CD4-positive, alpha-beta T cell (primary cell): ENCODE measurements at regions of chr3 and their contacts with region 1.

Region 1: DNA sequence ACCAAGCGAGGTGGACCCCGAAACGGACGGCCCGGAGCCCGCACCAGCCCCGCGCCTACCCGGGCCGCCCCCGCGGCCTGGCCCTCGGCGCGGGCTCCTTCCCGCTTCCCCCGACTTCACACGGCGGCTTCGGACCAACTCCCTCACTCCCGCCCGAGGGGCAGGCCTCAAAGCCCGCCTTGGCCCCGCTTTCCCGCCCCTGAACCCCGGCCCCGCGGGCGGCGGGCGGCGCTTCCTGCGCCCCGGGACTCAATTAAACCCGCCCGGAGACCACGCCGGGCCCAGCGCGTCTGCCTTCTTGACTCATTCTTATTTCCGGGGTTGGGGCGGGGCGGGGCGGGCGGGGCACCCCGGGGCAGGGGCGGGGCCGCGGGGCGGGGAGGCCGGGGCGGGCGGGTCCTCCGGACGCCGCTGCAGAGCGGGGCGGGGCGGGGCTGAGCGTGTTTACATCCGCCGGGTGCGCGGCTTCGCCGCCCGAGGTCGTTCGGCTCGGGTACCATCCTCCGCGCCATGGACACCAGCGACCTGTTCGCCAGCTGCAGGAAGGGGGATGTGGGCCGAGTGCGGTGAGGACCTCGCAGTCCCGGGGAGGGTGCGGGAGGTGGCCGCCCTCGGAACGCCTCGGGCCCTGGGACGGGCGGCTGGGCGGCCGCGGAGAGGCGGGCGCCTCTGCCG is at the start of gene ABTB1:
- DNase-seq: peak; percentile 75 to 94 (median 86)
- ATAC-seq: peak; percentile 83
- H3K4me3 ChIP-seq: peak within 1 kb of the TSS; percentile 73
- H3K4me3 Mint-ChIP-seq: peak within 1 kb of the TSS; percentile 97
- H3K27ac ChIP-seq: peak within 1 kb of the TSS; percentile 64 to 79
- H3K27ac Mint-ChIP-seq: peak within 1 kb of the TSS; percentile 98
- H3K4me1 ChIP-seq: peaks cover 32% of the 10 kb centered on the region
- H3K4me1 Mint-ChIP-seq: peaks cover 40% of the 10 kb centered on the region
- H3K27me3 ChIP-seq: no peaks in the 10 kb centered on the region
- H3K27me3 Mint-ChIP-seq: no peaks in the 10 kb centered on the region
- CTCF ChIP-seq: no peak
- total RNA-seq, gene ABTB1: 116 to 118 TPM

Region 2: GRCh38 chr3:126083913-126084767 is 1588.5 kb before region 1 on chr3 and contains the start of gene SLC41A3:
- CTCF ChIA-PET with region 1: no interaction called
- POLR2A ChIA-PET with region 1: interaction called, 5 read pairs
- intact Hi-C with region 1: loop called in 1 of 2 experiments (anchors 10 kb)
- DNase-seq: peak; percentile 65 to 88 (median 82)
- ATAC-seq: peak; percentile 86
- H3K4me3 ChIP-seq: peak within 1 kb of the TSS; percentile 70
- H3K4me3 Mint-ChIP-seq: peak within 1 kb of the TSS; percentile 93
- H3K27ac ChIP-seq: peak within 1 kb of the TSS; percentile 33 to 72
- H3K27ac Mint-ChIP-seq: peak within 1 kb of the TSS; percentile 85
- H3K4me1 ChIP-seq: peaks cover 28% of the 10 kb centered on the region
- H3K4me1 Mint-ChIP-seq: peaks cover 30% of the 10 kb centered on the region
- H3K27me3 ChIP-seq: no peaks in the 10 kb centered on the region
- H3K27me3 Mint-ChIP-seq: no peaks in the 10 kb centered on the region
- CTCF ChIP-seq: peak; percentile 82
- total RNA-seq, gene SLC41A3: 26.5 to 29.1 TPM

Region 3: GRCh38 chr3:126703512-126704462 is 968.9 kb before region 1 on chr3 and contains the start of gene CHCHD6:
- CTCF ChIA-PET with region 1: no interaction called
- POLR2A ChIA-PET with region 1: no interaction called
- intact Hi-C with region 1: loop called in 1 of 2 experiments (anchors 5 kb)
- DNase-seq: peak; percentile 93 to 98 (median 96)
- ATAC-seq: peak; percentile 94
- H3K4me3 ChIP-seq: peak within 1 kb of the TSS; percentile 81
- H3K4me3 Mint-ChIP-seq: peak within 1 kb of the TSS; percentile 98
- H3K27ac ChIP-seq: no peak within 1 kb of the TSS
- H3K27ac Mint-ChIP-seq: peak within 1 kb of the TSS; percentile 70
- H3K4me1 ChIP-seq: peaks cover 19% of the 10 kb centered on the region
- H3K4me1 Mint-ChIP-seq: peaks cover 31% of the 10 kb centered on the region
- H3K27me3 ChIP-seq: peaks cover 0 to 4% of the 10 kb centered on the region in 2 experiments
- H3K27me3 Mint-ChIP-seq: peaks cover 21% of the 10 kb centered on the region
- CTCF ChIP-seq: peak; percentile 25
- total RNA-seq, gene CHCHD6: 8.7 to 9.3 TPM

Region 4: DNA sequence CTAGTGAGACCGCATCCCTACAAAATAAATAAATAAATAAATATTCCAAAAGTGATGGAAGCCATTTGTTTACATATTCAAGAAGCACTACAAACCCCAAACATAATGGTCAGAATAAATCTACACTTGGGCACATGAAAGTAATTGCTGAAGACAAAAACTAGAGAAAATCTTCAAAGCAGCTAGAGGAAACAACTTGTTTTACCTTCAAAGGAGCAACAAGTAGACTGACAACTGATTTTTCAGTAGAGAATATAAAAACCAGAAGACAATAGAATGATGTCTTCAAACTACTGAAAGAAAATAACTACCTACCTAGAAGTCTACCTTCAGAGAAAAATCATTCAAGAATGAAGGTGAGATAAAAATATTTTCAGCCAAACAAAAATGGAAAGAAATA is 171.5 kb before region 1 on chr3:
- CTCF ChIA-PET with region 1: no interaction called
- POLR2A ChIA-PET with region 1: no interaction called
- intact Hi-C with region 1: no loop called
- DNase-seq: no peak
- ATAC-seq: no peak
- H3K4me3 ChIP-seq: no peak overlapping the region
- H3K4me3 Mint-ChIP-seq: no peak overlapping the region
- H3K27ac ChIP-seq: no peak overlapping the region
- H3K27ac Mint-ChIP-seq: no peak overlapping the region
- H3K4me1 ChIP-seq: no peaks in the 10 kb centered on the region
- H3K4me1 Mint-ChIP-seq: no peaks in the 10 kb centered on the region
- H3K27me3 ChIP-seq: peaks cover 5 to 7% of the 10 kb centered on the region in 2 experiments
- H3K27me3 Mint-ChIP-seq: peaks cover 49% of the 10 kb centered on the region
- CTCF ChIP-seq: no peak

Region 5: GRCh38 chr3:127598841-127599570 is 73.6 kb before region 1 on chr3:
- CTCF ChIA-PET with region 1: no interaction called
- POLR2A ChIA-PET with region 1: interaction called, 23 read pairs
- intact Hi-C with region 1: loop called (anchors 2 to 5 kb)
- DNase-seq: no peak
- ATAC-seq: no peak
- H3K4me3 ChIP-seq: peak overlapping the region; percentile 61
- H3K4me3 Mint-ChIP-seq: peak overlapping the region; percentile 79
- H3K27ac ChIP-seq: peak overlapping the region in 1 of 2 donors; percentile 16
- H3K27ac Mint-ChIP-seq: peak overlapping the region; percentile 49
- H3K4me1 ChIP-seq: peaks cover 17% of the 10 kb centered on the region
- H3K4me1 Mint-ChIP-seq: peaks cover 16% of the 10 kb centered on the region
- H3K27me3 ChIP-seq: no peaks in the 10 kb centered on the region
- H3K27me3 Mint-ChIP-seq: no peaks in the 10 kb centered on the region
- CTCF ChIP-seq: no peak

Region 6: DNA sequence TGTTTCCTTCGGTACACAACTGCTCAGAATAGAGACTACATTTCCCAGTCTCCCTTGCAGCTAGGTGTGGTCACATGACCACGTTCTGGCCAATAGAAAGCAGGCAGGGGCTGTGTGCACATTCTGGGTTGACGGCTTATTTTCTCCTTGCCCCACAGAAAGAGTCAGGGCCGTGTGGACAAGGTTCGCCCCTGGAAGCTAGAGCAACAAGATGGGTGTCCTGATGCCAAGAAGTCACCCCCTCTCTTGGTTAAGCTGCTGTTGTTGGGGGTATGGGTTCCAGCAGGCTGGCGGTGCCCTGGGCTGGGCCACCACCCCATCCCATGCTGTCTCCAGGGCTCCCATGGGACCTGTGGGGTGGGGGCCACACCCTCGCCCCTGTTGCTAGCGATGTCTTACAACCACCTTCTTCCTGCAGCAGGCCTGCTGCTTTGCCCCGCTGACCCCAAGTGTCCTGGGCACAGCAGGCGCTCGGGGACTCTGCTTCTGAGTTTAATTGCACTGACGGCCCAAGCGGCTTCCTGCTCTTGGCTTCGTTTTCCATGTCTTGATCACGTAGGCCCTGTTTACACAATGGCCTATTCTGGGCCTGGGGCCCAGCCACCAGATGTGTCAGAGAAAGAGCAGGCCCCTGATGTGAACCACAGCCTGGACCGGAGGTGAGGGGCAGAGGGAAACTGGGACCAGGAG is 25.0 kb after region 1 on chr3:
- CTCF ChIA-PET with region 1: interaction called, 3 read pairs
- POLR2A ChIA-PET with region 1: interaction called, 11 read pairs
- intact Hi-C with region 1: no loop called
- DNase-seq: peak in 8 of 14 experiments; percentile 25 to 74 (median 44)
- ATAC-seq: peak; percentile 76
- H3K4me3 ChIP-seq: no peak overlapping the region
- H3K4me3 Mint-ChIP-seq: peak overlapping the region; percentile 11
- H3K27ac ChIP-seq: no peak overlapping the region
- H3K27ac Mint-ChIP-seq: no peak overlapping the region
- H3K4me1 ChIP-seq: peaks cover 13% of the 10 kb centered on the region
- H3K4me1 Mint-ChIP-seq: peaks cover 5% of the 10 kb centered on the region
- H3K27me3 ChIP-seq: no peaks in the 10 kb centered on the region
- H3K27me3 Mint-ChIP-seq: no peaks in the 10 kb centered on the region
- CTCF ChIP-seq: no peak

Region 7: GRCh38 chr3:128153156-128154041 is 480.7 kb after region 1 on chr3 and contains the start of gene EEFSEC:
- CTCF ChIA-PET with region 1: no interaction called
- POLR2A ChIA-PET with region 1: no interaction called
- intact Hi-C with region 1: loop called in 1 of 2 experiments (anchors 10 kb)
- DNase-seq: peak; percentile 72 to 90 (median 82)
- ATAC-seq: peak; percentile 87
- H3K4me3 ChIP-seq: peak within 1 kb of the TSS; percentile 58
- H3K4me3 Mint-ChIP-seq: peak within 1 kb of the TSS; percentile 87
- H3K27ac ChIP-seq: peak within 1 kb of the TSS; percentile 56 to 80
- H3K27ac Mint-ChIP-seq: peak within 1 kb of the TSS; percentile 84
- H3K4me1 ChIP-seq: peaks cover 22% of the 10 kb centered on the region
- H3K4me1 Mint-ChIP-seq: peaks cover 40% of the 10 kb centered on the region
- H3K27me3 ChIP-seq: no peaks in the 10 kb centered on the region
- H3K27me3 Mint-ChIP-seq: no peaks in the 10 kb centered on the region
- CTCF ChIP-seq: no peak
- total RNA-seq, gene EEFSEC: 13.1 to 13.9 TPM

Region 8: GRCh38 chr3:128745742-128746141 is 1073.1 kb after region 1 on chr3:
- CTCF ChIA-PET with region 1: no interaction called
- POLR2A ChIA-PET with region 1: no interaction called
- intact Hi-C with region 1: no loop called
- DNase-seq: no peak
- ATAC-seq: no peak
- H3K4me3 ChIP-seq: no peak overlapping the region
- H3K4me3 Mint-ChIP-seq: no peak overlapping the region
- H3K27ac ChIP-seq: no peak overlapping the region
- H3K27ac Mint-ChIP-seq: no peak overlapping the region
- H3K4me1 ChIP-seq: peaks cover 38% of the 10 kb centered on the region
- H3K4me1 Mint-ChIP-seq: peaks cover 53% of the 10 kb centered on the region
- H3K27me3 ChIP-seq: no peaks in the 10 kb centered on the region
- H3K27me3 Mint-ChIP-seq: no peaks in the 10 kb centered on the region
- CTCF ChIP-seq: no peak